ENCODE measurements at regions of chr2 and their contacts with region 1.

Region 1: GRCh38 chr2:223779877-223780276 is 57.5 kb downstream of the AP1S3 start:
- DNase-seq: peak; percentile 79
- ATAC-seq: peak; percentile 78
- H3K4me3 ChIP-seq: no peak overlapping the region
- H3K4me3 Mint-ChIP-seq: no peak overlapping the region
- H3K27ac ChIP-seq: no peak overlapping the region
- H3K27ac Mint-ChIP-seq: peak overlapping the region; percentile 37
- H3K4me1 ChIP-seq: no peaks in the 10 kb centered on the region
- H3K4me1 Mint-ChIP-seq: peaks cover 8% of the 10 kb centered on the region
- H3K27me3 ChIP-seq: no peaks in the 10 kb centered on the region
- H3K27me3 Mint-ChIP-seq: no peaks in the 10 kb centered on the region
- CTCF ChIP-seq: peak; percentile 67

Region 2: GRCh38 chr2:223285370-223286265 is 494.3 kb before region 1 on chr2:
- CTCF ChIA-PET with region 1: no interaction called
- POLR2A ChIA-PET with region 1: no interaction called
- intact Hi-C with region 1: no loop called
- DNase-seq: no peak
- ATAC-seq: no peak
- H3K4me3 ChIP-seq: no peak overlapping the region
- H3K4me3 Mint-ChIP-seq: no peak overlapping the region
- H3K27ac ChIP-seq: no peak overlapping the region
- H3K27ac Mint-ChIP-seq: no peak overlapping the region
- H3K4me1 ChIP-seq: no peaks in the 10 kb centered on the region
- H3K4me1 Mint-ChIP-seq: no peaks in the 10 kb centered on the region
- H3K27me3 ChIP-seq: no peaks in the 10 kb centered on the region
- H3K27me3 Mint-ChIP-seq: no peaks in the 10 kb centered on the region
- CTCF ChIP-seq: no peak

Region 3: GRCh38 chr2:223860809-223861738 is 81.2 kb after region 1 on chr2:
- CTCF ChIA-PET with region 1: interaction called, 9 read pairs
- POLR2A ChIA-PET with region 1: no interaction called
- intact Hi-C with region 1: loop called (anchors 1 kb)
- DNase-seq: no peak
- ATAC-seq: no peak
- H3K4me3 ChIP-seq: no peak overlapping the region
- H3K4me3 Mint-ChIP-seq: no peak overlapping the region
- H3K27ac ChIP-seq: no peak overlapping the region
- H3K27ac Mint-ChIP-seq: peak overlapping the region; percentile 56
- H3K4me1 ChIP-seq: peaks cover 0 to 9% of the 10 kb centered on the region in 2 donors
- H3K4me1 Mint-ChIP-seq: peaks cover 15% of the 10 kb centered on the region
- H3K27me3 ChIP-seq: no peaks in the 10 kb centered on the region
- H3K27me3 Mint-ChIP-seq: no peaks in the 10 kb centered on the region
- CTCF ChIP-seq: no peak

Region 4: GRCh38 chr2:223957092-223957851 is 177.4 kb after region 1 on chr2 and contains the start of gene MRPL44:
- CTCF ChIA-PET with region 1: interaction called, 3 read pairs
- POLR2A ChIA-PET with region 1: no interaction called
- intact Hi-C with region 1: loop called (anchors 2 kb)
- DNase-seq: peak; percentile 96
- ATAC-seq: peak; percentile 99
- H3K4me3 ChIP-seq: peak within 1 kb of the TSS; percentile 66 to 94 (median 86)
- H3K4me3 Mint-ChIP-seq: peak within 1 kb of the TSS; percentile 94
- H3K27ac ChIP-seq: peak within 1 kb of the TSS; percentile 72 to 78
- H3K27ac Mint-ChIP-seq: peak within 1 kb of the TSS; percentile 97
- H3K4me1 ChIP-seq: peaks cover 48 to 52% of the 10 kb centered on the region in 2 donors
- H3K4me1 Mint-ChIP-seq: peaks cover 67% of the 10 kb centered on the region
- H3K27me3 ChIP-seq: no peaks in the 10 kb centered on the region
- H3K27me3 Mint-ChIP-seq: no peaks in the 10 kb centered on the region
- CTCF ChIP-seq: no peak
- total RNA-seq, gene MRPL44: 23.4 and 26.7 TPM in 2 replicates

Region 5: GRCh38 chr2:224025874-224026273 is 246.0 kb after region 1 on chr2:
- CTCF ChIA-PET with region 1: no interaction called
- POLR2A ChIA-PET with region 1: no interaction called
- intact Hi-C with region 1: no loop called
- DNase-seq: peak; percentile 90
- ATAC-seq: peak; percentile 97
- H3K4me3 ChIP-seq: peak overlapping the region in 2 of 5 experiments; percentile 2 to 40
- H3K4me3 Mint-ChIP-seq: peak overlapping the region; percentile 57
- H3K27ac ChIP-seq: peak overlapping the region; percentile 43 to 44
- H3K27ac Mint-ChIP-seq: peak overlapping the region; percentile 74
- H3K4me1 ChIP-seq: peaks cover 36% of the 10 kb centered on the region in 2 donors
- H3K4me1 Mint-ChIP-seq: peaks cover 40% of the 10 kb centered on the region
- H3K27me3 ChIP-seq: no peaks in the 10 kb centered on the region
- H3K27me3 Mint-ChIP-seq: no peaks in the 10 kb centered on the region
- CTCF ChIP-seq: no peak